Esophagus squamous epithelium (tissue), 5 donors: ENCODE measurements at regions of chr13 and their contacts with region 1.

Region 1: DNA sequence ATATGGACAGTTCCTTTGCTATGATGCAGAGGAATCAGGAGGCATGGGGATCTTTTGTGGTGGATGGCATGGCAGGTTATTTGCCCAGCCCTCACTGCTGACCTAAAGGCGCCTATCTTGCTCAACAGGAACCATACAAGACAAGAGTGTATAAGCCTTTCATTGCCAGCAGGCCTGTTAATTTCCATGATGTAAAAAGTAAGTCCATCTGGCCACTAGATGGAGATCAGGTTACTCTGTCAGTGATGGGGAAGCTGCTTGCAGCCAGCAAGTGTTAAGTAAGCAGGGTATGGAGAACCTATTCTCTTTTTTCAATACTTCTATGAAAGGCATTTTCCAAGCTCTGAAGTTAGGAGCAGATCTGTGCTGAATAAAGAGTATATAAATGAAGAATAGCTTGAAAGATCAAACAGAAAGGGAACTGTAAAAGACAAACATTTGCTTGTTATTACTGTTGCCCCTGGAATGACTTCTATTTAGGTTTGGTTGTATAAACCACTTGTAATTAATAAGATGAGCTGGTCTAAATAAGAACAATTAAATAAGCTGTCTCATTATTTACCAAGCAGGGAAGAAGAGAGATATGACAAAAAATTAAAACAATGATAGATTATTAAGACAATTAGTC is 210.9 kb downstream of the RGCC start:
- DNase-seq: no peak
- H3K4me3 ChIP-seq: no peak overlapping the region
- H3K27ac ChIP-seq: no peak overlapping the region
- H3K4me1 ChIP-seq: peaks cover 0 to 15% (median 0%) of the 10 kb centered on the region in 3 donors
- H3K27me3 ChIP-seq: no peaks in the 10 kb centered on the region
- CTCF ChIP-seq: peak; percentile 14 to 90 (median 80)
- POLR2A ChIP-seq: no peak

Region 2: DNA sequence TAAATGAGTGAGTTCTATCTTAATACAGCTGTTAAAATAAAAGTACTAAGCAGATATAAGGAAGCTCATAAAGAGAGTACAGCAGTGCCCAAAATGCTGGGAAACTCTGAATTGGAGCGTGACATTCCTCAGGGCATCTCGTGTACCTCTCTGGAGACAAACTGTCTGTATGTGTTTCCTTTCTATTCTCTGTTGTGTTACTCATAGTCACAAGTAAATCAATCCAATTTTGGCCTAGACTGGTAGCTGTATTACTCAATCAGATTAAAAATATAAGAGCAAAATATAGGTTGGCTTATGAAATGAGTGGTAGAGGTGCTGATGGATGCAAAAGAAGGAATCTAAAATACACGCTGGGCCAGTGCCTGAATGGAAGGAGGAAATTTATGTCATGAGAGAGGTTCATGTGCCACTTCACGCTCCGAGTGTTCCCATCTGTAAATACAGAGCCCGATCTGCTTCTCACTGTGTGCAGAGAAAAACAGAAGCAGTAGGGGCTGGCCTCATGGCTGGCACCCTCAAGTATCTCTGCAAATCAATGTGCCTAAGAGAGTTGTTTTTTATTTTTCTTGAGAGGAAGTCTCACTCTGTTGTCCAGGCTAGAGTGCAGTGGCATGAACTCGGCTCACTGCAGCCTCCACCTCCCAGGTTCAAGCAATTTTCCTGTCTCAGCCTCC is 269.6 kb before region 1 on chr13:
- intact Hi-C with region 1: loop called (anchors 10 kb)
- DNase-seq: no peak
- H3K4me3 ChIP-seq: no peak overlapping the region
- H3K27ac ChIP-seq: no peak overlapping the region
- H3K4me1 ChIP-seq: peaks cover 0 to 12% (median 0%) of the 10 kb centered on the region in 3 donors
- H3K27me3 ChIP-seq: no peaks in the 10 kb centered on the region
- CTCF ChIP-seq: no peak
- POLR2A ChIP-seq: no peak

Region 3: DNA sequence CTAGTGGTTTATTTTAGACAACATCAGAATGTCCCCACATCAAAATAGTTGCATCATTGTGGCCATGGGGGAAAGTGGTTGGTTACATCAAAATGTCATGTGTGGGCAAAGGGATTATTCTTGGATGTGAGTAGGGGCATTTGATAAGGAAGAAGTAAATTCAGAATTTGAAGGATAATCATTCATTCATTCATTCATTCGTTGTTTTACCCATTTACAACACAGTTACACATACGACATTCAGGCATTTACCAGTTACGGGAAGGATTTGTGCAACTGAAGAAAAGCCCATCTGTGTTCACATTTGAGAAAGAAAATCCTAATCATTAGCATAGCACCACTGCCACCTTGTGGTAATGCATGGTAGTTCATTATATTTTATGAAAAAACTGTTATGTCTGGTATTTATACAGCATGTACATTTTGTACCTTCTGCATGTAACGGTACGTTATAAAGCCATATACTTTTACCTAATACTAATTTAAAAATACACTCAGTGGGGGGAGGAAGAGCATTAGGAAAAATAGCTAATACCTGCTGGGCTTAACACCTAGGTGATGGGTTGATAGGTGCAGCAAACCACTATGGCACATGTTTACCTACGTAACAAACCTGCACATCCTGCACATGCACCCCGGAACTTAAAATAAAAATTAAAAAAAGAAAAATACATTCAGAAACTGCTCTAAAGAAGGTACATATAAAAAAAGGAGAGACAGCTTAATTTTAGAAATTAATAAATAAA is 442.3 kb after region 1 on chr13:
- intact Hi-C with region 1: loop called (anchors 10 kb)
- DNase-seq: no peak
- H3K4me3 ChIP-seq: no peak overlapping the region
- H3K27ac ChIP-seq: no peak overlapping the region
- H3K4me1 ChIP-seq: peaks cover 0 to 27% (median 5%) of the 10 kb centered on the region in 3 donors
- H3K27me3 ChIP-seq: no peaks in the 10 kb centered on the region
- CTCF ChIP-seq: peak; percentile 56 to 90 (median 84)
- POLR2A ChIP-seq: no peak